Head of caudate nucleus (tissue), 42 donors: ENCODE measurements at regions of chr6 and their contacts with region 1.

Region 1: GRCh38 chr6:27177485-27178406 is 69.8 kb upstream of the PRSS16 start:
- DNase-seq: peak; percentile 64 to 91 (median 78)

Region 2: GRCh38 chr6:27753668-27754407 is 576.1 kb after region 1 on chr6:
- intact Hi-C with region 1: loop called (anchors 5 kb)
- DNase-seq: peak; percentile 29 to 91 (median 71)

Region 3: DNA sequence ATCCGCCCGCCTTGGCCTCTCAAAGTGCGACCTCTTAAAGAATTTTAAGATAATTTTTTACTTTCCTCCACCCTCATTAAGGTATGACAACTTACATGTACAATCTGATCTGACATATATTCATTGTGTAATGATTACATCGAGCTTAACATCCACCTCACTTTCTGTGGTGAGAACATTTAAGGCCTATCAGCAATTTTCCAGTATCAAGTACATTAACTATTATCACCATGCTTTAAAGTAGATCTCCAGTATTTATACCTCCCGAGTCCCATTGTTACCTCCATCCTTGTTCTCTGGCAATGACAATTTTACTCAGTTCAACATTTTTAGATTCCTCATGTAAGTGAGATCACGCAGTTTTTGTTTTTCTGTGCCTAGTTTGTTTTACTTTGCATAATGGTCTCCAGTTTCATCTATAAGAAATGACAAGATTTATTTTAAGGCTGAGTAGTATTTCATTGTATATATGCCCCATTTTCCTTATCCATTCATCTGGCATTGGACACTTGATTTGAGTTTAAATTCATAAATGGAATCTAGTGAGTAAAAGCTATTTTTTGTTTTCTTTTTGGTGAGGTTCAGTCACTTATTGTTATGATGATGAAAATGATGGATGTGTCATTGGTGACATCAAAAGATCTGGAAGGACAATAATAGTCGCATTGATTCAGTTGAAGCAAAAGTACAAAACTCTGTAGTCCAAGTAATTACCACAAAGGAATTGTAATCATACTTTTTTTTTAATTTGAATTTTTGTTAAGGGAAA is 647.5 kb after region 1 on chr6:
- intact Hi-C with region 1: no loop called
- DNase-seq: no peak

Region 4: DNA sequence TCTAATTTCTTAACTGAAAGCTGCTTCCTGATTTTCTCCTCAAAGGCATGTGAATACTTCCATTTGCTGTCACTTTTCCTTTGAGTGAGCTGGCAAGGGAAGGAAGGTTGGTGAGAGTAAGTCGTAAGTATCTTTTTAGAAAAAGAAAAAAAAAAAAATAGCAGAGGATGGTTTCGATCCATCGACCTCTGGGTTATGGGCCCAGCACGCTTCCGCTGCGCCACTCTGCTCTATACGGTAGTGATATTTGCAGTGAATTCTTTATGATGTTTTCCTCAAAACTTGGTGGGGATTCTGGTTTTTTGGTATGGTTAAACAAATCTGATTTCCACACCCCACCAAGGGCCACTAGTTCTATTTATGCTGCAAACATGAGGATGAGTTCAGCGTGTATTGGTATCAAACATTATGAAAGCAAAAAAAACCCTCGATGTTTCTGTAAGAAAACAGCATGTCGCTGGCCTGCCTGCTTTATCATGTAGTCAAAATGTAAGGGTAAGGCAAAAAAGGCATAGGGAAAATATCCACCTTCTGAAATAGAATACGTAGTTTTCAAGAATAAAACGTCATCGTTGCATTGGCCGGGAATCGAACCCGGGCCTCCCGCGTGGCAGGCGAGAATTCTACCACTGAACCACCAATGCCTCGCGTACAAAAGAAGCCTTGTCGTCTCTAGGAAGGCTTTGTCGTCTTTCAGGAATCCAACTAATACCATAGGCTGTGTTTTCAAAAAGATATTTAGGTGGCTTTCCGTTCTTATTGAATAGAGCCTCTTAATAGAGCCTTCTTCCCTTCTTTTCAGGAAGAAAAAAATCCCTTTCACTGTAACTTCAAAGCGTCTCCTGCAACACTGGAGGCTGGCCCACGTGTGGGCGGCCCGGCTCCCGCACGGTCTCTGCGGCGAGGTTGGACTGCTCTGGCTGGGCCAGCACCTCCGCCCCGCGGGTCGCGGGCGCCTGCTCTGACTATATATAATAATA is 724.9 kb after region 1 on chr6:
- intact Hi-C with region 1: loop called (anchors 5 kb)
- DNase-seq: peak; percentile 67 to 97 (median 90)